GM12878 (cell line): ENCODE measurements at regions of chr17 and their contacts with region 1.

Region 1: GRCh38 chr17:78865682-78866390 is 25.2 kb upstream of the USP36 start:
- DNase-seq: no peak
- ATAC-seq: peak; percentile 93
- H3K4me3 ChIP-seq: no peak overlapping the region
- H3K27ac ChIP-seq: no peak overlapping the region
- H3K4me1 ChIP-seq: no peaks in the 10 kb centered on the region
- H3K27me3 ChIP-seq: 0 out of 4 replicates have a peak, but pooled peaks cover 0 to 1% of the 10 kb centered on the region in 2 experiments
- CTCF ChIP-seq: peak; percentile 87 to 92 (median 92); a peak in 5 of 6 replicates
- EP300 ChIP-seq: no peak
- POLR2A ChIP-seq: no peak
- RAD21 ChIP-seq: peak; percentile 77

Region 2: DNA sequence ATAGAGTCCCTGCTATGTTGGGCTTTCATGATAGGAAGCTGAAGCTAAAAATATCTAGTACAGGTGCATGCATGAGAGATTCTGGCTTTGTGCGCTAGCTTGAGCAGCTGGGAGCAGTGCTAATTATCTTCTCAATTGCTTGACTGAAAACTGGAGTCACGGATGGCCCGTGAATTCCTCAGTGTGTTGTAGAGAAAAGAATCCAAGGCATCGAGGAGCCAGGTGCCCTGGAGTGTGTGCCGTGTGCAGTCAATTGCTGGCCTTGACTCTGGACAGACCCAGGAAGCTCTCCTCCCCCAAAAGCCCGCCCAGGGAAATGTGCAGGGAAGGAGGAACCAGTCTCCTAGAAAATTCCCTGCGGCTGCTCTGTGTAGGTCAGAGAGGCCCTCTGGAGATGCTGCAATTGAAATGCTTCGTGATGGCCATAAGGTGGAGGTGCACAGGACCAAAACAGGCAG is 99.7 kb after region 1 on chr17:
- CTCF ChIA-PET with region 1: interaction called, 59 read pairs
- POLR2A ChIA-PET with region 1: no interaction called
- RAD21 ChIA-PET with region 1: interaction called, 3 read pairs
- SMC1A ChIA-PET with region 1: interaction called, 17 read pairs
- in situ Hi-C with region 1: loop called (anchors 5 kb)
- intact Hi-C with region 1: no loop called
- DNase-seq: no peak
- ATAC-seq: no peak
- H3K4me3 ChIP-seq: no peak overlapping the region
- H3K27ac ChIP-seq: no peak overlapping the region
- H3K4me1 ChIP-seq: peaks cover 6% of the 10 kb centered on the region
- H3K27me3 ChIP-seq: no peaks in the 10 kb centered on the region
- CTCF ChIP-seq: no peak
- EP300 ChIP-seq: no peak
- POLR2A ChIP-seq: no peak
- RAD21 ChIP-seq: no peak

Region 3: DNA sequence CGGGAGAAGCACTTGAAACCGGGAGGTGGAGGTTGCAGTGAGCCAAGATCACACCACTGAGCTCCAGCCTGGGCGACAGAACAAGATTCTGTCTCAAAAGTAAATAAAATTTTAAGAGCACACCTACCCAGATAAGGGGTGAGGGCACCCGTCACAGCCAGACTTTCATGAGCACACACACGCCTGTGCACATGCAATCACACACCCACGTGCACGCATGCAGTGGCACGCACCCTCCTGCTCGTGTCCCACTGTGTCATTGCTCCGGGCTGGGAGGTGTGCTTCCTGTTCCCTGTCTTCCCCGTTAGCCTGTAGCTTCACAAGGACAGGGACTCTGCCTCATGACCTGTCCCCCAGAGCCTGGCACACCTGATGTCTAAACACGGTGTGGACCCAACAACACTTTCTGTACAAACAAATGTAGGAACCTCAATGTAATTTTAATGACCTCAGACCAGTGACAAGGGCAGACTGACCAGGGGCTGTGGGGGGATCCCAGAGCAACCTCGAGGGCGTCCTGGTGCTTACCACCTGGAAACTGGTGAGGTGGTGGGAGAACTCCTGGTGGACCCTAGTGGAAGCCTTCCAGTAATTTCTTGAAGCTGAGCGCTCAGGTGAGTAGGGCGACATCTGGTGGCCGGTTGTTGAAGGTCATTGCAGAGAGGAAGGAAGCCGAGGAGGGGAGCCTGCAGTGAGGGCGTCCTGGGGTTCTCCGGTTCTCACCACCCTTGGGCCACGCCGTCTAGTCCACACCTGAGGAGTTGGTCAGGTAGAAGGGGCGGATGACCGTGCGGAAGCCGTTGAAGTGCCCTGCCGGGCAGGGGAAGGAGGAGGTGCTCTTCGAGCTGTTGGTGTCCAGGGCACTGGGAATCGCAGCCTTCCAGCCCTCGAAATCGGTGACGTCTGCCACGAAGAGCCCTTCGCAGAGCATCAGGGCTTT is 105.3 kb after region 1 on chr17:
- CTCF ChIA-PET with region 1: interaction called, 59 read pairs
- POLR2A ChIA-PET with region 1: no interaction called
- RAD21 ChIA-PET with region 1: interaction called, 15 read pairs
- SMC1A ChIA-PET with region 1: interaction called, 17 read pairs
- in situ Hi-C with region 1: loop called (anchors 5 kb)
- intact Hi-C with region 1: loop called (anchors 1 kb)
- DNase-seq: no peak
- ATAC-seq: peak; percentile 90
- H3K4me3 ChIP-seq: no peak overlapping the region
- H3K27ac ChIP-seq: no peak overlapping the region
- H3K4me1 ChIP-seq: no peaks in the 10 kb centered on the region
- H3K27me3 ChIP-seq: no peaks in the 10 kb centered on the region
- CTCF ChIP-seq: peak; percentile 70 to 88 (median 78)
- EP300 ChIP-seq: no peak
- POLR2A ChIP-seq: no peak
- RAD21 ChIP-seq: peak; percentile 80